Cardiac septum (tissue), 1 donor: ENCODE measurements at regions of chr3 and their contacts with region 1.

Region 1: GRCh38 chr3:196198771-196199753 is 12.1 kb downstream of the ZDHHC19 start:
- DNase-seq: no peak

Region 2: GRCh38 chr3:196020373-196020772 is 178.7 kb before region 1 on chr3:
- intact Hi-C with region 1: loop called (anchors 5 kb)
- DNase-seq: no peak

Region 3: GRCh38 chr3:196096382-196096953 is 102.6 kb before region 1 on chr3:
- intact Hi-C with region 1: no loop called
- DNase-seq: no peak